ENCODE measurements at regions of chr5 and their contacts with region 1.

Region 1: GRCh38 chr5:93349613-93350012 is 231.4 kb downstream of the NR2F1-AS1 start:
- DNase-seq: no peak
- ATAC-seq: no peak
- H3K4me3 ChIP-seq: no peak overlapping the region
- H3K27ac ChIP-seq: no peak overlapping the region
- H3K4me1 ChIP-seq: peaks cover 0 to 16% of the 10 kb centered on the region in 2 experiments; a peak in 1 of 4 replicates
- H3K27me3 ChIP-seq: no peaks in the 10 kb centered on the region
- CTCF ChIP-seq: no peak
- POLR2A ChIP-seq: no peak
- RAD21 ChIP-seq: no peak

Region 2: GRCh38 chr5:93299681-93300308 is 49.8 kb before region 1 on chr5:
- CTCF ChIA-PET with region 1: no interaction called
- POLR2A ChIA-PET with region 1: no interaction called
- RAD21 ChIA-PET with region 1: no interaction called
- intact Hi-C with region 1: loop called (anchors 5 kb)
- DNase-seq: no peak
- ATAC-seq: no peak
- H3K4me3 ChIP-seq: no peak overlapping the region
- H3K27ac ChIP-seq: peak overlapping the region; percentile 70
- H3K4me1 ChIP-seq: peaks cover 0 to 26% of the 10 kb centered on the region in 2 experiments; a peak in 1 of 4 replicates
- H3K27me3 ChIP-seq: no peaks in the 10 kb centered on the region
- CTCF ChIP-seq: no peak
- POLR2A ChIP-seq: no peak
- RAD21 ChIP-seq: no peak